GM12878 (cell line): ENCODE measurements at regions of chr4 and their contacts with region 1.

Region 1: DNA sequence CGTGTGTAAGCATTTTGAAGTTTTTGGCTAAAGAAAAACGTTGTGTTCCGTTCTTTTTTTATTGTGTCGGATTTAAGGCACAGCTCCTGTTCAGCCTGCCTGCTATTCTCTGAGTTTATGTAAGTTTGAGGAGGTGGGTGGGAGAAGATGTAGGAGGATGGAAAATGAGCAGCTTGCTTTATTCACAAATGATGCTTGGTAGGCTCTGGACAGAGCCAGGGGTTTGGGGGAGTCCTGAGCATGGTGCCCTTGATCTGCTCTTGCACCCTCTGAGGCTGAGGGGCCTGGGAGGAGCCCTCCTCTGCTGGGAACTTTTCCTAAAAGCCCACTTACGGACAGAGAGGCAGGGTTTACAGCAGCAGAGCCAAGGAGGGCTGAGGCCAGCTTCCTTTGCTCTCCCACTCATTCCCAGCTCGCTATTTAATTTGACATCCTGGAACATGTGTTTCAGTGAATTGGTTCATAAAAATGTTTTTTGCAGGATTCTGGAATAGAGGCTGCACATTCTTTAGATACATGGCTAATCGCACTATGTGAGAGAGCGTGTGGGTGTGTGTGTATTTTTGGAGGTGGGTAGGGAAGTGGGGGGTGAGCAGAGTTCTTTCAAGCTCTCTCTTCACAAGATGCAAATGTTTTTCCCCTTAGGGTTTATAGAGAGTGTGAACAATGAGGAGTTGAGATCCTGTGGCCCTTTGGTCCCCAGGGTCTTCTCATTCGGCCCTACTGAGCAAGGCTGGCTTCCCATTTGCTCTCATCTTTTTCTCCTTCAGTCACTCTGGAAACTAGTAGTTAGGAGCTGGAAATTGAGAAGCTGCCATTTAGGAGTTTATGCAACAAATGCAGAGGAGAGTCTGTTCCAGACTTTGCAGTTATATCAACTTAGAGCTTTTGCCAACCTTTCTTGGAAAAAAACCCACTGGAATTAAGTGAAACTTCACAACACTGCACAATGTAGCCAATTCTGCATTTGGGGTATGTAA is 32.1 kb downstream of the TMEM131L start:
- DNase-seq: peak; percentile 72
- ATAC-seq: peak; percentile 69
- H3K4me3 ChIP-seq: peak overlapping the region; percentile 51
- H3K27ac ChIP-seq: peak overlapping the region; percentile 58
- H3K4me1 ChIP-seq: peaks cover 53% of the 10 kb centered on the region
- H3K27me3 ChIP-seq: no peaks in the 10 kb centered on the region
- CTCF ChIP-seq: no peak
- EP300 ChIP-seq: peak; percentile 23 to 38; a peak in 1 of 4 replicates
- POLR2A ChIP-seq: no peak
- RAD21 ChIP-seq: no peak

Region 2: GRCh38 chr4:153438916-153439756 is 59.1 kb before region 1 on chr4:
- CTCF ChIA-PET with region 1: interaction called, 8 read pairs
- POLR2A ChIA-PET with region 1: interaction called, 12 read pairs
- RAD21 ChIA-PET with region 1: interaction called, 19 read pairs
- SMC1A ChIA-PET with region 1: interaction called, 17 read pairs
- in situ Hi-C with region 1: no loop called
- intact Hi-C with region 1: no loop called
- DNase-seq: peak; percentile 79
- ATAC-seq: peak; percentile 76
- H3K4me3 ChIP-seq: peak overlapping the region; percentile 65
- H3K27ac ChIP-seq: peak overlapping the region; percentile 80
- H3K4me1 ChIP-seq: peaks cover 38% of the 10 kb centered on the region
- H3K27me3 ChIP-seq: no peaks in the 10 kb centered on the region
- CTCF ChIP-seq: 0 out of 6 replicates have a peak, but pooled peaks of 1 of the 3 experiments have one; percentile 4
- EP300 ChIP-seq: no peak
- POLR2A ChIP-seq: no peak
- RAD21 ChIP-seq: no peak

Region 3: DNA sequence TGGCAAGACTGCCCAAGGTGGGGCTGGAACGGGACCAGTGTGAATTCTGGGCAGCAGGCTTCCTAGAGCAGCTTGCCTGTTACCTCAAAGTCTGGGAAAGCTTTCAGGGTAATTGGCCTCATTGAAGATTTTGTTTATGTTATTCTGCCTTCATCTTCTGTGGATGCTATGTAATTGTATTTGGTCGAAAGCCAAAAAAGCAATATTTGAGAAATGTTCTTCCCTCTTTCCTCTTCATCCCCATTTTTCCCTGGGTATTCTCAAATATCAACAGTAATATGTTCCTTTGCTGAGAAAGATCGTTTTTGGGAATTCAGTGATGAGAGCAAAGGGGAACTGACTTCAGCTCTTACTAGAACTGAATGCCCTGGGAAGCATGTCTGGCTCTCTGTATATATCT is 19.2 kb before region 1 on chr4:
- CTCF ChIA-PET with region 1: interaction called, 17 read pairs
- POLR2A ChIA-PET with region 1: interaction called, 268 read pairs
- RAD21 ChIA-PET with region 1: interaction called, 429 read pairs
- SMC1A ChIA-PET with region 1: interaction called, 356 read pairs
- in situ Hi-C with region 1: no loop called
- intact Hi-C with region 1: no loop called
- DNase-seq: no peak
- ATAC-seq: no peak
- H3K4me3 ChIP-seq: peak overlapping the region; percentile 48; the same call in 1 of the 2 replicates
- H3K27ac ChIP-seq: peak overlapping the region; percentile 62
- H3K4me1 ChIP-seq: peaks cover 59% of the 10 kb centered on the region
- H3K27me3 ChIP-seq: no peaks in the 10 kb centered on the region
- CTCF ChIP-seq: no peak
- EP300 ChIP-seq: no peak
- POLR2A ChIP-seq: no peak
- RAD21 ChIP-seq: no peak

Region 4: GRCh38 chr4:153521999-153522801 is 23.9 kb after region 1 on chr4:
- CTCF ChIA-PET with region 1: interaction called, 7 read pairs
- POLR2A ChIA-PET with region 1: interaction called, 322 read pairs
- RAD21 ChIA-PET with region 1: interaction called, 197 read pairs
- SMC1A ChIA-PET with region 1: interaction called, 177 read pairs
- in situ Hi-C with region 1: no loop called
- intact Hi-C with region 1: no loop called
- DNase-seq: peak; percentile 71
- ATAC-seq: peak; percentile 54
- H3K4me3 ChIP-seq: peak overlapping the region; percentile 59
- H3K27ac ChIP-seq: peak overlapping the region; percentile 96
- H3K4me1 ChIP-seq: peaks cover 85% of the 10 kb centered on the region
- H3K27me3 ChIP-seq: no peaks in the 10 kb centered on the region
- CTCF ChIP-seq: no peak
- EP300 ChIP-seq: no peak; a peak in 1 of 4 replicates
- POLR2A ChIP-seq: peak; percentile 56; the same call in 1 of the 2 replicates
- RAD21 ChIP-seq: no peak

Region 5: DNA sequence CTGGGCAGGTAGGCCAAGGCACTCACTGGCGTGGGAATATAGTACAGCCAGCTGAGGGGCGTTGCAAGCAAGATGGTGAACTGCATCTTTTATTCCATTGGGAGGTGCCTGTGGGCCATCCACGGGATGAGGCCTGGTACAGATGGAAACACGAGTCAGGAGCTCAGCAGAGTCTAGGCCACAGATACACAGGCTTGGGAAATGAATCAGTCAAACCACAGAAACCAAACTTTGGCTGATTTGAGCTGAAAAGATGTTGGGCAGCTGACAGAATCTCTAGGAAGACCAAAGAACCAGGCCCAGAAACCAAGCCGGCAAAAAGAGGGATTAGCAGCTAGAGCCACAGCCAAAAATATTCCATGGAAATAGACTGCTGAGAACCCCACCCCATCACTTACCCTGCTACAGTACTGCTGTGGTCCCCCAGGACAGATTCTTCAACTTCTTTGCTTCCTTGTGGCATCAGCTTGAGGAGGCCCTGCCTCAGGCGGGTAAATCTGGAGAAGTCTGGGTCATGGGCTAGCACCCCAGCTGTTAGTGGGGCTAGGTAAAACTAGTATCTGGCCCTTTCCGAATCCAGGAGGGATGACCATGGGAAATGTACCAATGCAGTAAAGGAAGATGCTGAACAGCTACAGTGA is 43.3 kb after region 1 on chr4:
- CTCF ChIA-PET with region 1: interaction called, 8 read pairs
- POLR2A ChIA-PET with region 1: interaction called, 322 read pairs
- RAD21 ChIA-PET with region 1: interaction called, 3 read pairs
- SMC1A ChIA-PET with region 1: interaction called, 14 read pairs
- in situ Hi-C with region 1: no loop called
- intact Hi-C with region 1: no loop called
- DNase-seq: no peak
- ATAC-seq: peak; percentile 64
- H3K4me3 ChIP-seq: no peak overlapping the region
- H3K27ac ChIP-seq: no peak overlapping the region
- H3K4me1 ChIP-seq: peaks cover 21% of the 10 kb centered on the region
- H3K27me3 ChIP-seq: no peaks in the 10 kb centered on the region
- CTCF ChIP-seq: no peak
- EP300 ChIP-seq: no peak
- POLR2A ChIP-seq: no peak
- RAD21 ChIP-seq: no peak